ENCODE measurements at regions of chr6 and their contacts with region 1.

Region 1: DNA sequence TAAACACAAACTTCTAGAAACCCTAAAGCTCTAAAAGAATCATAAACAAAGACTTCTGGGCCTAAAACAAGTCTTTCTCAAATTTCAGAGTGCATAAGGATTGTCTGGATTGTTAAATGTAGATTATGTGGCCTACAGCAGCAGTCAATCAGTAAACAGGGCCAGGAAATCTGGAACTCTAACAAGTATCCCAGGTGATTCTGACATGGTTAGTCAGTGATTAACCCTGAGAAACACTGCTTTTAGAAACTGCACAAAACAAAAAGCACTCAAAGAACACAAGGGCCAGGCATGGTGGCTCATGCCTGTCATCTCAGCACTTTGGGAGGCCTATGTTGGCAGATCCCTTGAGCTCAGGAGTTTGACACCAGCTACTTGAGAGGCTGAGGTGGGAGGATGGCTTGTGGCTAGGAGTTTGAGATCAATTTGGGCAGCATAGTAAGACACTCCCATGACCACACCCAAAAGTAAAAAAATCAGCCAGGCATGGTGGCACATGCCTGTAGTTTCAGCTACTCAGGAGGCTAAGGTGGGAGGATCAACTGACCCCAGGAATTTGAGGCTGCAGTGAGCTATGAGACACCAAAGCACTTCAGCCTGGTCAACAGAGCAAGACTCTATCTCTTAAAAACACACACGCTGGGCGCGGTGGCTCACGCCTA is 5.9 kb downstream of the MED20 start:
- DNase-seq: no peak
- ATAC-seq: no peak
- H3K4me3 ChIP-seq: no peak overlapping the region
- H3K4me3 Mint-ChIP-seq: no peak overlapping the region
- H3K27ac ChIP-seq: no peak overlapping the region
- H3K27ac Mint-ChIP-seq: no peak overlapping the region
- H3K4me1 ChIP-seq: peaks cover 2 to 6% of the 10 kb centered on the region in 2 experiments
- H3K4me1 Mint-ChIP-seq: peaks cover 11 to 19% (median 19%) of the 10 kb centered on the region in 3 donors
- H3K27me3 ChIP-seq: no peaks in the 10 kb centered on the region
- H3K27me3 Mint-ChIP-seq: no peaks in the 10 kb centered on the region

Region 2: DNA sequence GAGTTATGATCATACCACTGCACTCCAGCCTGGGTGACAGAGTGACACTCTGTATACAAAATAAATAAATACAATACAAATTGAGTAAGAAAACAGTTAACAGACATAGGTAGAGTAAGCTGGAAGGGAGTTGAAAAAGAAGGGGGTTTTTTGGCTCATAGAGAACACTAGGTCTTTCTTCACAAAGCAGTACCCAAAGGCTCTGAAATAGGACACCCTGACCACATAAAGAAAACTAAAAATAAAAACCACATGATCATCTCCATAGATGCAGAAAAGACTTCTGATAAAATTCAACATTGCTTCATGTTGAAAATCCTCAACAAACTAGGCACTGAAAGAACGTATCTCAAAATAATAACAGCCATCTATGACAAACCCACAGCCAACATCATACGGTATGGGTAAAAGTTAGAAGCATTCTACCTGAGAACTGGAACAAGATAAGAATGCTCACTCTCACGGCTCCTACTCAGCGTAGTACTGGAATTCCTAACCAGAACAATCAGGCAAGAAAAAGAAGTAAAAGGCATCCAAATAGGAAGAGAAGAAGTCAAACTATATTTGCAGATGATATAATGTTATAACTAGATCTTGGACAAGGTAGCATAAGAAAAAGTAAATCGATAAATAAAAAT is 78.9 kb before region 1 on chr6:
- CTCF ChIA-PET with region 1: no interaction called
- POLR2A ChIA-PET with region 1: interaction called in 1 of 2 experiments, 10 read pairs
- DNase-seq: no peak
- ATAC-seq: peak in 1 of 4 experiments; percentile 31
- H3K4me3 ChIP-seq: no peak overlapping the region
- H3K4me3 Mint-ChIP-seq: no peak overlapping the region
- H3K27ac ChIP-seq: no peak overlapping the region
- H3K27ac Mint-ChIP-seq: no peak overlapping the region
- H3K4me1 ChIP-seq: no peaks in the 10 kb centered on the region
- H3K4me1 Mint-ChIP-seq: peaks cover 3 to 13% (median 3%) of the 10 kb centered on the region in 3 donors
- H3K27me3 ChIP-seq: no peaks in the 10 kb centered on the region
- H3K27me3 Mint-ChIP-seq: no peaks in the 10 kb centered on the region

Region 3: DNA sequence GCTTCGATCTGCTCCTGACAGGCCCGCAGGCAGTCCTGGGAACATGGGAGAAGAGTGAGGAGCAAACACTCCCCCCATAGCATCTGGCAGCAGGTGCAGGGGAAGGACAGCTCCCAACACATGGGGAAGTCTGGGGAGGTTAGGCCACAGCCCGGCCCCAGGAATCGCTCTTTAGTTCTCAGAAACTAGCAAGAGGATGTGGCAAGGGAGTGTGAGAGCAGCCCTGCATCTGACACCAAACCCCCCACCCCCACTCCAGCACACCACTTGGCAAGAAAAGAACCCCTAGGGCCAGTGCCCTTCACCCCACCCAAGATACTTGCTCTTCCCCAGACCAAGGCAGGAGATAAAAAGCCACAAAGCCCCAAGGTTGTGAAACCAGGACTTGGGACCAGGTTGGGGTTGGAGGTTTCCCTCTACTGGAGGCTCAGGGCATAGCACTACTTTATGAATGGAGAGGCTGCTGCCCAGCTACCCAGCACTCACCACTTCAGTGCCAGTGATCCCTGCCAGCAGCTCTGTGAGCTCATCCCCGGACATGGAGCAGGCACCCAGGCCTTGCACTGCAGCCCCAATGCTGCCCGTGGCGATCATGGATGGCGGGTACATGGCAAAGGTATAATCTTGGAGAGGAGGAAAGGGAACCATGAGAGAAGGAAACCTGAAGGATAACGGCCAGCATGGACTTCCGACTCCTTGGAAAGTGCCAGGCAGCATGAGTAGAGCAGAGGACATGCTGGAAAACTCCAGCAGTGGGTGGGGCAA is 21.3 kb after region 1 on chr6:
- CTCF ChIA-PET with region 1: no interaction called
- POLR2A ChIA-PET with region 1: no interaction called
- DNase-seq: peak; percentile 36 to 89 (median 75)
- ATAC-seq: peak; percentile 59 to 68 (median 66)
- H3K4me3 ChIP-seq: peak overlapping the region; percentile 9 to 35
- H3K4me3 Mint-ChIP-seq: peak overlapping the region; percentile 58 to 93 (median 66)
- H3K27ac ChIP-seq: peak overlapping the region; percentile 50
- H3K27ac Mint-ChIP-seq: peak overlapping the region; percentile 89 to 92
- H3K4me1 ChIP-seq: peaks cover 52 to 76% of the 10 kb centered on the region in 2 experiments
- H3K4me1 Mint-ChIP-seq: peaks cover 68 to 81% (median 75%) of the 10 kb centered on the region in 3 donors
- H3K27me3 ChIP-seq: no peaks in the 10 kb centered on the region
- H3K27me3 Mint-ChIP-seq: no peaks in the 10 kb centered on the region

Region 4: DNA sequence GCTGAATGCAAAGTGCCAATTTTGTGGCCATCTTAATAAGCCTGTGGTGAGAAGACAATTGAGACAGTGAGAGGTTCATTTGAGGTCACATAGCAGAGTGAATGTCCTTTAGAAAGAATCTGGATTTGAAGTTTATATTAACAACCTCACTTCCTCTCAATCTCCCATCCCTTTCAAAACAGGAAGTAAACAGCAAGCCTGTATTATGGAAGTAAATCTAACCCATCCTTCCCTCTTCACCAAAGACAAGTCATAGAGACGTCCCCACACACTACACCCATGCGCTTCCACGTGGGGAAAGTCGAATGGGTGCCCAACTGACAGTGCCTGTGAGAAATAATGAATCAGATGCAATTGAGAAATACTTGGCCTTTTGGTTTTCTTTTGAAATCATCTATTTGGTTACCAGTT is 55.4 kb after region 1 on chr6:
- CTCF ChIA-PET with region 1: no interaction called
- POLR2A ChIA-PET with region 1: no interaction called
- DNase-seq: peak in 2 of 35 experiments; percentile 25 to 37
- ATAC-seq: peak in 3 of 4 experiments; percentile 30 to 67 (median 40)
- H3K4me3 ChIP-seq: no peak overlapping the region
- H3K4me3 Mint-ChIP-seq: peak overlapping the region; percentile 7 to 36 (median 11)
- H3K27ac ChIP-seq: peak overlapping the region; percentile 29
- H3K27ac Mint-ChIP-seq: peak overlapping the region; percentile 86 to 89
- H3K4me1 ChIP-seq: peaks cover 9 to 63% of the 10 kb centered on the region in 2 experiments
- H3K4me1 Mint-ChIP-seq: peaks cover 64 to 88% (median 88%) of the 10 kb centered on the region in 3 donors
- H3K27me3 ChIP-seq: no peaks in the 10 kb centered on the region
- H3K27me3 Mint-ChIP-seq: no peaks in the 10 kb centered on the region

Measured in T-cell (primary cell).